Activated T-helper 1 cell treated with anti-CD3 and anti-CD28 coated beads, Interleukin-12 subunit alpha, Interleukin-12 subunit beta, Interleukin-2, Interleukin-4 antibody, amounts not matched to agents 30 ng/mL and 10 ng/mL and 1 ng/mL, durations not matched to agents 14 hours and 24 hours and 36 hours (primary cell): ENCODE measurements at regions of chr2 and their contacts with region 1.

Region 1: GRCh38 chr2:189860161-189860560 is 75.9 kb downstream of the PMS1 start:
- DNase-seq: no peak
- H3K4me3 Mint-ChIP-seq: no peak overlapping the region
- H3K27ac Mint-ChIP-seq: no peak overlapping the region
- H3K4me1 Mint-ChIP-seq: peaks cover 1% of the 10 kb centered on the region
- H3K27me3 Mint-ChIP-seq: peaks cover 1% of the 10 kb centered on the region

Region 2: DNA sequence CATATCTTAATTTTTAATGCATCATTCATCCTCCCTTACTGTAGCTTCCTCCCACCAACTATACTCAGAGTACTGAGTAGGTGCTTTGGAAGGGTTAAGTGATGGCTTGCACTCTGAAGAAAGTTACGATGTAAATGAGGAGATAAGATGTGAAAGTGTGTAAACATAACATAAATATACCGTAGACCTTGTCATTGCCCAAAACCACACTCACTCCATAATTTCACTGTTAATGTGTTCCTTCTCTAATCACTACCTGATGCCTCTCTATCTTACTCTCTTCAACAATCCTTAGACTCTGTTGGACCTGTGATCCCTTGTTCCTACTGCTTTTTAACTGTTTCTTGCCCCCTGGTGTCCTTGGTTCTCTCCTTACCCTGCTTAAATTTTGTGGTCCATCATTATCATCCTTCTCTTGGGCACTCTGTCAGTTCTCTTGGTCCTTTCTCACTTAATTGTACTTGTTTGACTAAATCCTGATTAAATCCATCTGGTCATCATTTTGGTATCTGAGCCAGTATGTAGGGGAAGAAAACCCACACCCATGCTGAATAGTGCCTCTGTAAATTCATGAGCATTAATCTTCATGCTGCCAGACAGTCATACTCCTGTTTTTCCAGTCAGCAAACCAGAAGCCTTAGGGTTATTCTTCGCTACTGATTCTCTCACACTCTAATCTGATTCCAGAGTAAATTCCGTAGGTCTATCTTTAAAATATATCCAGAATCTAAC is 30.9 kb before region 1 on chr2:
- intact Hi-C with region 1: no loop called
- DNase-seq: no peak
- H3K4me3 Mint-ChIP-seq: no peak overlapping the region
- H3K27ac Mint-ChIP-seq: no peak overlapping the region
- H3K4me1 Mint-ChIP-seq: no peaks in the 10 kb centered on the region
- H3K27me3 Mint-ChIP-seq: no peaks in the 10 kb centered on the region

Region 3: DNA sequence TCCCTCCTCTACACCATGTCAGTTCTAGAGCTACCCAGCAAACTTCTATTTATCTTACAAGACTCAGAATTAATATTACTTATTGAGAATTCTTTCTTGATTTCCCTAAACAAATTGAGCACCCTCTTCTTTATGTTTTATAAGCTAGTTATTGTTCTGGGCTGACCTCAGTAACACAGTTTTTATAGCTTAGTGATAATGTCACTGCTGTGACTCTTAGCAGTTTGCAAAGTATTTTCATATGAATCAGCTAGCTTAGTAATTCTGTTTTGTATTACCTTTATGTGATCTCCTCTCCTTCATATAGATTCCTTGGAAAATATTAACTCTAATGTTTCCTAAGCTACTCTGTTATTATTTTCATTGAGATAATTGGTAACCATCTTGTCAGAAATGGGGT is 38.9 kb after region 1 on chr2:
- intact Hi-C with region 1: no loop called
- DNase-seq: no peak
- H3K4me3 Mint-ChIP-seq: no peak overlapping the region
- H3K27ac Mint-ChIP-seq: no peak overlapping the region
- H3K4me1 Mint-ChIP-seq: no peaks in the 10 kb centered on the region
- H3K27me3 Mint-ChIP-seq: peaks cover 10% of the 10 kb centered on the region

Region 4: GRCh38 chr2:190959911-190960788 is 1100.0 kb after region 1 on chr2:
- intact Hi-C with region 1: loop called (anchors 5 kb)
- DNase-seq: no peak
- H3K4me3 Mint-ChIP-seq: no peak overlapping the region
- H3K27ac Mint-ChIP-seq: peak overlapping the region; percentile 31
- H3K4me1 Mint-ChIP-seq: peaks cover 13% of the 10 kb centered on the region
- H3K27me3 Mint-ChIP-seq: no peaks in the 10 kb centered on the region